ENCODE measurements at regions of chr7 and their contacts with region 1.

Region 1: DNA sequence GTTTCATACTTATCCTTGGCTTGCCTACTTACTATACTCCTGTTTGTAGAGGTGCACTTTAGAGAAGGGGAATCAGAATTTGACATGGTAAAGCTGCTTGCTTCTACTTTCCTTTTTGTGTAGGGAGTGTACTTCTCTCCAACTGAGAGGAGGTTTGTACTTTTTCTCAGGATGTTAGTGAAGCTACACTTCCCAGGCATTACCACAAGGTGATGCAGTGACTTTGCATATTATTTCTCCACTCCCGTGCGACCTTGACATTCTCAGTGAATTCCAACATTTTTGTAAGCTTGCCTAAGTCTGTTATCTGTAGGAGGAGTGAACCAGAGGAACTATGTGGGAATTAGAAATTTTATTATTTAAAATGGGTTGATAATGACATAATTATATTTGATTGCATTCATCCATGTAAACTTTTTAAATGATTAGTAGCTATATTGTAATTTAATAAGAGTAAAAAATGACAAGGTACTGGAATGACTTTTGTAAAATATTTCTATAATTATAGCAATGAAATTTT is 5.2 kb downstream of the TAX1BP1 start:
- DNase-seq: no peak
- ATAC-seq: no peak
- H3K4me3 Mint-ChIP-seq: no peak overlapping the region
- H3K27ac Mint-ChIP-seq: no peak overlapping the region
- H3K4me1 Mint-ChIP-seq: peaks cover 49% of the 10 kb centered on the region
- H3K27me3 Mint-ChIP-seq: no peaks in the 10 kb centered on the region

Region 2: GRCh38 chr7:27774717-27775328 is 29.7 kb after region 1 on chr7:
- CTCF ChIA-PET with region 1: interaction called, 12 read pairs
- POLR2A ChIA-PET with region 1: no interaction called
- intact Hi-C with region 1: no loop called
- DNase-seq: no peak
- ATAC-seq: no peak
- H3K4me3 Mint-ChIP-seq: no peak overlapping the region
- H3K27ac Mint-ChIP-seq: no peak overlapping the region
- H3K4me1 Mint-ChIP-seq: peaks cover 10% of the 10 kb centered on the region
- H3K27me3 Mint-ChIP-seq: no peaks in the 10 kb centered on the region

Region 3: GRCh38 chr7:27994639-27995038 is 249.5 kb after region 1 on chr7:
- CTCF ChIA-PET with region 1: no interaction called
- POLR2A ChIA-PET with region 1: no interaction called
- intact Hi-C with region 1: no loop called
- DNase-seq: no peak
- ATAC-seq: no peak
- H3K4me3 Mint-ChIP-seq: no peak overlapping the region
- H3K27ac Mint-ChIP-seq: no peak overlapping the region
- H3K4me1 Mint-ChIP-seq: peaks cover 10% of the 10 kb centered on the region
- H3K27me3 Mint-ChIP-seq: no peaks in the 10 kb centered on the region

Measured in activated CD4-positive, alpha-beta T cell treated with anti-CD3 and anti-CD28 coated beads for 36 hours (primary cell).